ENCODE measurements at regions of chr17 and their contacts with region 1.

Region 1: GRCh38 chr17:47633996-47634395 is 15.7 kb upstream of the KPNB1 start:
- DNase-seq: no peak
- ATAC-seq: no peak
- H3K4me3 ChIP-seq: no peak overlapping the region
- H3K4me3 Mint-ChIP-seq: no peak overlapping the region
- H3K27ac ChIP-seq: no peak overlapping the region
- H3K27ac Mint-ChIP-seq: peak overlapping the region; percentile 55 to 79
- H3K4me1 ChIP-seq: peaks cover 24% of the 10 kb centered on the region
- H3K4me1 Mint-ChIP-seq: peaks cover 20 to 26% of the 10 kb centered on the region in 2 donors
- H3K27me3 ChIP-seq: no peaks in the 10 kb centered on the region
- H3K27me3 Mint-ChIP-seq: no peaks in the 10 kb centered on the region
- CTCF ChIP-seq: no peak

Region 2: DNA sequence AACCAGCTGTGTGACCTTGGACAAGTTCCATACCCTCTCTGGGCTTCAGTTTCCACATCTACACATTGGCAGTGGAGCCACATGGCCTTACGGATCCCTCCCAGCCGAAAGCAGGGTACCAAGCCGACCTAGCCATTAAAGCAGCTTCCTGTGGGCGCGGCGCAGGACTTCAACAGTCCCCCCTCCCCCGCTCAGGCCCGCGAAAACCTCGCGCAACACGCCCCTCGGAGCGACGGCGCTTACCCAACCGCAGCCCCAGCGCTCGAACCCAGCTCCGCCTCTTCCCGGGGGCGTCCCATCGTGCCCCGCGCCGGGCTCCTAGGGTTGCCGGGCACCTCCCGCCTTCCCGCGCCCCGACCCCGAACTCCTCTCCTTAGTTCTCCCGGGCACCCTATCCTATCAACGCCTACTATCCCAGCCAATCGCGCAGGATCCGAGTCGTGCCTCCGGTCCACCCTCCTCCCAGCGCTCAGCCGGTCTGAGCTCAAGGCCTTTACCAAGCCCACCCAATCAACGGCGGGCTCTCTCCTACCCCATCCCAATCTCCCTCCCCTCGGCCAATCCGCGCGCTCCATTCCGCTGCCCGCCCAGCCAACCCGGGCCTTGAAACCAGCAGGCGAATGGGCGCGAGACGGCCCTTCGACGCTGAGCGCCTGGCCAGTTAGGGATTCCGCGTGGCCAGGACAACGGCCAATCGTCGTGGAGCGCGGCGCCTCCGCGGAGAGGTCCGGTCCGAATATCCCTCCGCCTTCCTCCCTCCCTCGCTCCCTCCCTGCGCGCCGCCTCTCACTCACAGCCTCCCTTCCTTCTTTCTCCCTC is 15.4 kb after region 1 on chr17 and contains the start of gene KPNB1:
- intact Hi-C with region 1: loop called (anchors 1 kb)
- DNase-seq: peak; percentile 96 to 99
- ATAC-seq: peak; percentile 81 to 94 (median 84)
- H3K4me3 ChIP-seq: peak within 1 kb of the TSS; percentile 84
- H3K4me3 Mint-ChIP-seq: peak within 1 kb of the TSS; percentile 96
- H3K27ac ChIP-seq: peak within 1 kb of the TSS; percentile 81
- H3K27ac Mint-ChIP-seq: peak within 1 kb of the TSS; percentile 93 to 97
- H3K4me1 ChIP-seq: peaks cover 17% of the 10 kb centered on the region
- H3K4me1 Mint-ChIP-seq: peaks cover 36 to 48% of the 10 kb centered on the region in 2 donors
- H3K27me3 ChIP-seq: no peaks in the 10 kb centered on the region
- H3K27me3 Mint-ChIP-seq: no peaks in the 10 kb centered on the region
- CTCF ChIP-seq: no peak
- total RNA-seq, gene KPNB1: 236 to 273 (median 259) TPM

Measured in natural killer cell (primary cell).